ENCODE measurements at regions of chr16 and their contacts with region 1.

Region 1: GRCh38 chr16:67279296-67280089 is at the start of gene PLEKHG4:
- DNase-seq: peak; percentile 71
- H3K4me3 ChIP-seq: peak within 1 kb of the TSS; percentile 16 to 60 (median 51)
- H3K27ac ChIP-seq: peak within 1 kb of the TSS; percentile 78
- H3K4me1 ChIP-seq: peaks cover 21% of the 10 kb centered on the region
- H3K27me3 ChIP-seq: no peaks in the 10 kb centered on the region
- CTCF ChIP-seq: peak; percentile 73
- POLR2A ChIP-seq: no peak
- total RNA-seq, gene PLEKHG4: 23.9 and 26.6 TPM in 2 replicates

Region 2: GRCh38 chr16:67268136-67268579 is 11.3 kb before region 1 on chr16:
- CTCF ChIA-PET with region 1: interaction called, 10 read pairs
- POLR2A ChIA-PET with region 1: interaction called, 3 read pairs
- dilution Hi-C with region 1: no loop called
- intact Hi-C with region 1: loop called (anchors 1 kb)
- DNase-seq: peak; percentile 87
- H3K4me3 ChIP-seq: no peak overlapping the region
- H3K27ac ChIP-seq: peak overlapping the region; percentile 43
- H3K4me1 ChIP-seq: peaks cover 23% of the 10 kb centered on the region
- H3K27me3 ChIP-seq: no peaks in the 10 kb centered on the region
- CTCF ChIP-seq: no peak
- POLR2A ChIP-seq: peak; percentile 26

Region 3: DNA sequence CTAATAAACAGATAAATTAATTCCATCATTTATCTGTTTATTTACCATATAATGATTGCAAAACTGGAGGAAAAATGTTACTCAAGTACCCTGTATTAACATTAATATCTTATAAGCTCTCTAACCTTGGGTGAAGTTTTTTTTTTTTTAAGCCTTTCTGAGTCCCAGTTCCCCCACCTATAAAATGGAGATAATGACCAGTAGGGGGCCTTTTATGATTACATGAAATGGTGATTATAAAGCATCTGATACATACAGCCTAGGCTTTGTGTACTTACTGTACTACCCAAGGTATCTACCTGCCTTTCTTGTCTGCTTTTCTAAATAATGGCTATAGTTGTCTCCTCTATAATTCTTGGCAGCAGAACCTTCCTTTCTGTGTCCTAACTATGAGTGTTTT is 69.7 kb after region 1 on chr16:
- CTCF ChIA-PET with region 1: interaction called, 3 read pairs
- POLR2A ChIA-PET with region 1: no interaction called
- dilution Hi-C with region 1: no loop called
- intact Hi-C with region 1: loop called (anchors 5 kb)
- DNase-seq: peak; percentile 59
- H3K4me3 ChIP-seq: no peak overlapping the region
- H3K27ac ChIP-seq: no peak overlapping the region
- H3K4me1 ChIP-seq: peaks cover 23% of the 10 kb centered on the region
- H3K27me3 ChIP-seq: no peaks in the 10 kb centered on the region
- CTCF ChIP-seq: peak; percentile 32 to 49
- POLR2A ChIP-seq: no peak

Region 4: GRCh38 chr16:67415872-67416793 is 136.6 kb after region 1 on chr16 and contains the start of gene ZDHHC1:
- CTCF ChIA-PET with region 1: no interaction called
- POLR2A ChIA-PET with region 1: no interaction called
- dilution Hi-C with region 1: no loop called
- intact Hi-C with region 1: loop called (anchors 1 kb)
- DNase-seq: peak; percentile 72
- H3K4me3 ChIP-seq: peak within 1 kb of the TSS; percentile 76 to 84 (median 82)
- H3K27ac ChIP-seq: peak within 1 kb of the TSS; percentile 81
- H3K4me1 ChIP-seq: peaks cover 13% of the 10 kb centered on the region
- H3K27me3 ChIP-seq: no peaks in the 10 kb centered on the region
- CTCF ChIP-seq: peak; percentile 36 to 48
- POLR2A ChIP-seq: no peak
- total RNA-seq, gene ZDHHC1: 12.9 and 14.4 TPM in 2 replicates

Region 5: DNA sequence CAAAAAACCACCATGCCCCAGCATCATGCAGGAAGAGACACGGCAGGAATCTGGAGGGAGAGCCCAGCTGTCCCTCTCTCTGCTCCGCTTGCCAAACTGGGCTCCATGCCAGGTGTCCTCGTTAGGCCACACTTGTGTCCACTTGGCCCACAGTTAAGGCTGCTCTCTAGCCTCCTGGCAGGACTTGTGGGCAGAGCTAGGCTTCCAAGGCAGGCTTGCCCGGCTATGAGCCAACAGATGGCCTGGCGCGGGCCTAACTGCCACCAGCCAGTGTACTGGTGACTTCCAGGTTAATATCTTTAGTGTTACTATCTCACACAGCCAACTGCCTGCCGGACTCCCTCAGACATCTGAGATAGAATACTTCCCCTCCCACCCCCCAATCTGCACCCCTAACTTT is 190.9 kb after region 1 on chr16:
- CTCF ChIA-PET with region 1: interaction called, 4 read pairs
- POLR2A ChIA-PET with region 1: no interaction called
- dilution Hi-C with region 1: no loop called
- intact Hi-C with region 1: loop called (anchors 5 kb)
- DNase-seq: no peak
- H3K4me3 ChIP-seq: no peak overlapping the region
- H3K27ac ChIP-seq: no peak overlapping the region
- H3K4me1 ChIP-seq: peaks cover 4% of the 10 kb centered on the region
- H3K27me3 ChIP-seq: no peaks in the 10 kb centered on the region
- CTCF ChIP-seq: no peak
- POLR2A ChIP-seq: no peak

Measured in endothelial cell of umbilical vein (primary cell).